Right ventricle myocardium superior (tissue), 1 donor: ENCODE measurements at regions of chrX and their contacts with region 1.

Region 1: DNA sequence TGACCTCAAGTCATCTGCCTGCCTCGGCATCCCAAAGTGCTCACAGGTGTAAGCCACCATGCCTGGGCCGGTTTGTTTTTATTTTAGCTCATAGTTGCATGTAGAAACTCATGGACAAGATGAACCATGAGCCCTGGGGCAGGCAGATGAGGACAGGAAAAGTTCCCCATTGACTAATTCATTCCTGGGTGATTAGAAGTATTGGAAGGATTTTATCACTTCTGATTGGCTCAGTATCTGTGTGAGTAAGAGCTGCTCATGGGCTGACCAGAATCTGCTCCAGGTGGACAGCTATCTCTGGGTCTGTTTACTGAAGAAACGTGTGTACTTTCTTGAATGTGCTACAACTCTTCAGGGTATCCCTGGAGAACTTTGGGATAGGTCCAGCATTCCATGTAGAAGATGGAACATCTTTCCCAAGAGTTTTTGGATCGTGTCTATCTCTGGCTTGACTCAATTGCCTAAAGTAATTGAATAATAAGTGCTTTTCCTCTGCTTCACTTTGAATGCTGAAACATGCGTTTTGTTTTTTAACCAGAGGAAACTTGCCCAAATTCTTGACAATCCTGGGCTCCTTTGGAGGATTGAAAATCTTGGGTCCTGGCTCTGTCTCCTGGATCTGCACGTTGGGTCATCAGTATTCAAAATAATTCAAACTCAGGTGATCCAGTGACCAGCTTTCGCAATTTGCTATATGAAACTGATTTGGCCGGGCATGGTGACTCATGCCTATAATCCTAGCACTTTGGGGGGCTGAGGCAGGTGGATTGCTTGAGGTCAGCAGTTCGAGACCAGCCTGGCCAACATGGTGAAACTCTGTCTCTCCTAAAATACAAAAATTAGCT is 88.6 kb upstream of the DHRSX start:
- DNase-seq: no peak
- ATAC-seq: no peak

Region 2: DNA sequence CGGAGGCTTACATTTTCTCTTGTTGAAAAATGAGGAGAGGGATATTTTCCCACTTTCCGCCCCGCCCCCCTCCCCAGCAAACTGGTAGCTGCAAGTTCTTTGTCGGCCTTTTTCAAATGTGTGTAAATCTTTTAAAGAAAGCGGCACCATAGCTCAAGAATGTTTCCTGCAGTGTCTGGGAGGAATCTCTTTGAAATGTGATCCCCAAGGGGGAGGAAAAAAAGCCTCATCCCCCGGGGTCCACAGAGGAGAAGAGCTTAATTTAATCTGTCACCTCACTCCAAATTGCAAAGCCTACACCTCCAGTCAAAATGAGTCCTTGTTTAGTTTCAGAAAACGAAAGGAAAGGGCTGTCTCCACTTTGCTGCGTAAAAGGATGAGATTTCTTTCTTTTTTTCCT is 939.8 kb before region 1 on chrX:
- intact Hi-C with region 1: loop called (anchors 5 kb)
- DNase-seq: no peak
- ATAC-seq: no peak